Pancreas (tissue), 10 donors: ENCODE measurements at regions of chr16 and their contacts with region 1.

Region 1: GRCh38 chr16:4802659-4803287 is 340 bp upstream of the ROGDI start:
- DNase-seq: peak; percentile 89 to 96 (median 94)
- ATAC-seq: peak; percentile 85 to 93 (median 88)
- H3K4me3 ChIP-seq: peak overlapping the region; percentile 58 to 91 (median 82)
- H3K27ac ChIP-seq: peak overlapping the region; percentile 67 to 87 (median 78)
- H3K4me1 ChIP-seq: peaks cover 14 to 21% (median 16%) of the 10 kb centered on the region in 3 donors
- H3K27me3 ChIP-seq: no peaks in the 10 kb centered on the region
- CTCF ChIP-seq: peak in 2 of 4 donors; percentile 15 to 17

Region 2: DNA sequence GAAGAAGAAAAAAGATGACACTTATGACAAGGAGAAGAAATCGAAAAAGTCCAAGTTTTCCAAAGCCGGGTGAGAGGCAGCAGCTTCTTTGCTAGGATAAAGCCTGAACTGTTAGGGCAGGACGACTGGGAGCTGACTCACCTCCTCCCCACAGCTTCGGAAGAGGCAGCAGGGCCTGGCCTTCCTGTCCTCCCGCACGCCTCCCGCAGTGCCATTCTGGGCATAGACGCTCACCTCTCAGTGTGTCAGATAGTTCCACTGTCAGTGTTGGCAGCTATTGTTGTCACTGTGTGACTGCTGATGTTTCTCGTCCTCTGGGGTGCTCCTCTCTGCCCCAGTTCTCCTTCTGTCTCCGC is 57.1 kb after region 1 on chr16:
- intact Hi-C with region 1: loop called in 1 of 3 experiments (anchors 10 kb)
- DNase-seq: no peak
- ATAC-seq: no peak
- H3K4me3 ChIP-seq: no peak overlapping the region
- H3K27ac ChIP-seq: no peak overlapping the region
- H3K4me1 ChIP-seq: peaks cover 0 to 3% (median 0%) of the 10 kb centered on the region in 3 donors
- H3K27me3 ChIP-seq: no peaks in the 10 kb centered on the region
- CTCF ChIP-seq: no peak

Region 3: GRCh38 chr16:5466551-5466950 is 663.8 kb after region 1 on chr16:
- intact Hi-C with region 1: no loop called
- DNase-seq: no peak
- ATAC-seq: no peak
- H3K4me3 ChIP-seq: no peak overlapping the region
- H3K27ac ChIP-seq: no peak overlapping the region
- H3K4me1 ChIP-seq: no peaks in the 10 kb centered on the region
- H3K27me3 ChIP-seq: no peaks in the 10 kb centered on the region
- CTCF ChIP-seq: no peak